Left colon (tissue), 2 donors: ENCODE measurements at regions of chr19 and their contacts with region 1.

Region 1: DNA sequence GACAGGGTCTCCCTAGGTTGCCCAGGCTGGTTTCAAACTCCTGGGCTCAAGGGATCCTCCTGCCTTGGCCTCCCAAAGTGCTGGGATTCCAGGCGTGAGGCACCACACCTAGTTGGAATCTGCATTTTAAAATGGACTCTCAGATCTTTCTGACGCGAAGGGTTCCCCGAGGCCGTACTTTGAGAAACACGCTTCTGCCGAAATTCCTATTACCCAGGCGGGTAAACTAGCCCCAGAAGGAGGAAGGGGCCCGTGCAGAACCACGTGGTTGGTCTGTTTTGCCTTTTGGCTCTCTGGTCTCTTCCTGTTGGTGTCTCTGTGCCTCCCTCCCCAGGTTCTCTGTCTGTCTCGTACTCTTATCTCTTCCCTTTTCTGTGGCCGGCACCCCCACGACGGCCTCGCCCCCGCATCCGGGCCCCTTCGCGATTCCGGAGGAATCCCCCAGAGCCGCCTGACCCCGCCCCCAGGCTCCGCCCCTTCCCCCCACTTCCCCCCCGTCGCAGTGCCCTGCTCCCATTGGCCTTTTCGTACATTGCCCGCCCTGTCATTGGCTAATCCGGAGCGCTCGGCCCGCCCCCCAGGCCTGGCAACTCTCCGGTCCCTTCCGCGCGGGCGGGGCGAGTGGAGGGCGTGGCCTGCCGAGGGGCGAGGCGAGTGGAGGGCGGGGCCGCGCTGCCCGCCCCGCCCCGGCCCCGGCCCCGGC is at the start of gene TNFAIP8L1:
- DNase-seq: peak; percentile 97 to 99
- ATAC-seq: peak; percentile 94
- total RNA-seq, gene TNFAIP8L1: 9.0 to 9.4 TPM

Region 2: GRCh38 chr19:4576016-4576933 is 62.7 kb before region 1 on chr19:
- intact Hi-C with region 1: loop called (anchors 10 kb)
- DNase-seq: peak in 1 of 2 donors; percentile 68
- ATAC-seq: peak; percentile 48